ENCODE measurements at regions of chr16 and their contacts with region 1.

Region 1: DNA sequence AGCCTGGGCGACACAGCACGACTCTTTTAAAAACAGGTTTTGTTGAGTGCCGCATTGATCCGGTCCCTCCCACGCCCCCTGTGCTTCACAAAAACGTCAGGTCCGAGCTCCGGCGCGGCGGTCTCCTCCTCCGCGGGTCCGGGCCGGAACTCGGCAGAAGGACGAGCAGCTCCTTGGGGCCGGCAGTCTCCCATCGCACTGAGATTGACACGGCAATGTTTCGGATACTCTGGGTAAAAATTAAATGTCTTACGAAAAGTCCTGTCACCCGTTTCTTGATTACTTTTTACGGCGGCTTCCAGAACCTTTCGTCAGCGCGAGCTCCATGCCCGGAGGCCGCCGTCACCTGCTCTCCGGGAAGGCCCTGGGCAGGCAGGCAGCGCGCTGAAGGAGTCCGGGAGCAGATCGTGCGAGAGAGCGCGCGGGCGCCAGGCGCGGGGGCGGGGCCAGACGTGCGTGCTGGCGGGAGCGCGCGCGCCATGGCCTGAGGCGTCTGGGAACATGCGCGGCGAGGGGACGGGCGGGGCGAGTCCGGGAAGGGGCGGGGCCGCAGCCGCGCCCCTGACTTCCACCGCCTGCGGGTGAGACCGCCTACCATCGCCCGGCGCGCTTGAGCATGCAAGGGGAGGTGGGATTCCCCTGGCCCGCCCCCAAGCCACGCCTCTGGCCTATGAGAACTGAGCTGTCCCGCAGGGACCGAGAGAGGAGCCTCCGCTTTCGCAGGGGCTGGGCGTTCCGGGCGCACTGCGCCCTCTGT is 11.7 kb upstream of the SRL start:
- DNase-seq: peak; percentile 95 to 100
- ATAC-seq: peak; percentile 95 to 96
- H3K4me3 ChIP-seq: peak overlapping the region; percentile 49
- H3K27ac ChIP-seq: peak overlapping the region; percentile 74 to 88
- H3K4me1 ChIP-seq: no peaks in the 10 kb centered on the region
- CTCF ChIP-seq: no peak
- EP300 ChIP-seq: no peak
- POLR2A ChIP-seq: peak; percentile 95
- RAD21 ChIP-seq: peak in 1 of 2 experiments; percentile 95; a peak in 4 of 5 replicates

Region 2: DNA sequence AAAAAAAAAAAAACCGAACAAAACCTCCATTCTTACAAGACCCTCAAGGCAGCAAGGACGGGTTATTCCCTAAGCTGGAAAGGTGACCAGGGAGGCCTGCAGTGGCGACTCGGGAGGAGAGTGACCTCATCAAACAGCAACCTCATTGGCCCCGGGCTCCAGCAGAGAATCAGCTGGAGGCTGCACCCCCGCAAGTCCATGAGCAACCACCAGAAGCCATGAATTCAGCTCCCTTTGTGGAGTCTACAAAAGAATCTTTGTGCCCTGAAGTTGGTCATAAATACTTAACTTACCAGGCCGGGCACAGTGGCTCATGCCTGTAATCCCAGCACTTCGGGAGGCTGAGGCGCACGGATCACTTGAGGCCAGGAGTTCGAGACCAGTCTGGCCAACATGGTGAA is 292.1 kb before region 1 on chr16:
- CTCF ChIA-PET with region 1: interaction called, 23 read pairs
- POLR2A ChIA-PET with region 1: no interaction called
- DNase-seq: peak; percentile 36 to 41
- ATAC-seq: peak; percentile 60 to 72; a peak in 4 of 6 replicates
- H3K4me3 ChIP-seq: peak overlapping the region; percentile 38
- H3K27ac ChIP-seq: peak overlapping the region; percentile 65 to 82
- H3K4me1 ChIP-seq: peaks cover 5% of the 10 kb centered on the region
- CTCF ChIP-seq: no peak
- EP300 ChIP-seq: no peak
- POLR2A ChIP-seq: no peak
- RAD21 ChIP-seq: no peak

Region 3: DNA sequence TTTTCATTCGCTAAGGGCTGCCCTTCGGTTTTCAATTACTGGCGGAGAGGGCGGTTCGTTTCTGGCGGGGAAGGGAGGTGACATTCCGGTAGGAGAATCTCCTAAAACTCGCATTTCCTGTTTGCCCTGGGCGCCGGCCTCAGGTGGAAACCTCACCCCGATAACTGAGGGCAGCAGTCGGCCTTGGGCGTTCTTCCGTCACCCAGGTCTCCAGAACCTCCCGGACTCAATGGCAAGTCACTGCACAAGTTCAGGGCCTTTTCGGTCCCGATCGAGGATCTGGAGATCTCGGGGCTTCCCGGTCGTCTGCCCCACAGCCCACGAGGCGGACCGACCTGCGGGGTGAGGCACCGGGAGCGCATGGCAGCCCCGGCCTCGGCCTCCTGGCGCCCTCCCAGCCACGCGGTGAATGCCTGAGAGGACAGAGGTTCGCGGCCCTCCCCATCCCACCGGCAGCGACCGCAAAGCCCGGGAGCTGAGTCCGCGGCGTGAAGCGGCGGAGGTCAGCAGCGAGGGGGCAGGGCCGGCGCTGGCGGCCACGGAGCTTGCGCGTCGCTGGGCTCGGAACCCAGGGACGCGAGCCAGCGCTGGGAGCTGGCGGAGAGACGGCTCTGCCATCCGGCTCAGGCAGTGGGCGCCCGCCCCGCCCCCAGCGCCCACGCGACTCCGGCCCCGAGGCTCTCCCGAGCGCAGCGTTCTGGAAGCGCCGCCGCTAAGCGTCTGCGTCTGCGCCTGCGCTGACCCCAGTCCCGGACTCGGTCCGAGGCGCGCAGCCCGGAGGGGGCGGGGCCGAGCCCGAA is 70.1 kb before region 1 on chr16:
- CTCF ChIA-PET with region 1: interaction called, 16 read pairs
- POLR2A ChIA-PET with region 1: interaction called, 25 read pairs
- DNase-seq: peak; percentile 88 to 91
- ATAC-seq: peak; percentile 88 to 94
- H3K4me3 ChIP-seq: peak overlapping the region; percentile 84
- H3K27ac ChIP-seq: peak overlapping the region; percentile 97 to 99
- H3K4me1 ChIP-seq: peaks cover 5% of the 10 kb centered on the region; the same call in 2 of the 3 replicates
- CTCF ChIP-seq: no peak
- EP300 ChIP-seq: no peak
- POLR2A ChIP-seq: peak; percentile 43; the same call in 1 of the 2 replicates
- RAD21 ChIP-seq: no peak; a peak in 2 of 5 replicates

Region 4: DNA sequence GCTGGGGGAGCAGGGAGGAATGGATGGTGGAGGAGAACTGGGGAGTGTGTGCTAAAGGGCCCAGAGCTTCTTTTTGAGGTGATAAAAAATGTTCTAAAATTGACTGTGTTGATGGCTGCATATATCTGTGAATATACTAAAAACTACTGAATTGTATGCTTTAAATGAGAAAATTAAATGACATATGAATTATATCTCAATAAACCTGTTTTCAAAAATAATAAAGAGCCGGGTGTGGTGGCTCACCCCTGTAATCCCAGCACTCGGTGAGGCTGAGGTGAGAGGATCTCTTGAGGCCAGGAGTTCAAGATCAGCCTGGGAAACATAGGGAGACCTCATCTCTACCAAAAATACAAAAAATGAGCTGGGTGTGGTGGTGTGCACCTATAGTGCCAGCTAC is 28.5 kb before region 1 on chr16:
- CTCF ChIA-PET with region 1: interaction called, 24 read pairs
- POLR2A ChIA-PET with region 1: interaction called, 3 read pairs
- DNase-seq: no peak
- ATAC-seq: no peak
- H3K4me3 ChIP-seq: no peak overlapping the region
- H3K27ac ChIP-seq: no peak overlapping the region
- H3K4me1 ChIP-seq: no peaks in the 10 kb centered on the region
- CTCF ChIP-seq: no peak
- EP300 ChIP-seq: no peak
- POLR2A ChIP-seq: no peak
- RAD21 ChIP-seq: no peak

Region 5: GRCh38 chr16:4277987-4278513 is 24.5 kb after region 1 on chr16:
- CTCF ChIA-PET with region 1: interaction called, 58 read pairs
- POLR2A ChIA-PET with region 1: interaction called, 16 read pairs
- DNase-seq: no peak
- ATAC-seq: no peak
- H3K4me3 ChIP-seq: no peak overlapping the region
- H3K27ac ChIP-seq: peak overlapping the region in 1 of 2 experiments; percentile 74; a peak in 3 of 6 replicates
- H3K4me1 ChIP-seq: peaks cover 12% of the 10 kb centered on the region
- CTCF ChIP-seq: no peak
- EP300 ChIP-seq: no peak
- POLR2A ChIP-seq: no peak
- RAD21 ChIP-seq: no peak

Region 6: DNA sequence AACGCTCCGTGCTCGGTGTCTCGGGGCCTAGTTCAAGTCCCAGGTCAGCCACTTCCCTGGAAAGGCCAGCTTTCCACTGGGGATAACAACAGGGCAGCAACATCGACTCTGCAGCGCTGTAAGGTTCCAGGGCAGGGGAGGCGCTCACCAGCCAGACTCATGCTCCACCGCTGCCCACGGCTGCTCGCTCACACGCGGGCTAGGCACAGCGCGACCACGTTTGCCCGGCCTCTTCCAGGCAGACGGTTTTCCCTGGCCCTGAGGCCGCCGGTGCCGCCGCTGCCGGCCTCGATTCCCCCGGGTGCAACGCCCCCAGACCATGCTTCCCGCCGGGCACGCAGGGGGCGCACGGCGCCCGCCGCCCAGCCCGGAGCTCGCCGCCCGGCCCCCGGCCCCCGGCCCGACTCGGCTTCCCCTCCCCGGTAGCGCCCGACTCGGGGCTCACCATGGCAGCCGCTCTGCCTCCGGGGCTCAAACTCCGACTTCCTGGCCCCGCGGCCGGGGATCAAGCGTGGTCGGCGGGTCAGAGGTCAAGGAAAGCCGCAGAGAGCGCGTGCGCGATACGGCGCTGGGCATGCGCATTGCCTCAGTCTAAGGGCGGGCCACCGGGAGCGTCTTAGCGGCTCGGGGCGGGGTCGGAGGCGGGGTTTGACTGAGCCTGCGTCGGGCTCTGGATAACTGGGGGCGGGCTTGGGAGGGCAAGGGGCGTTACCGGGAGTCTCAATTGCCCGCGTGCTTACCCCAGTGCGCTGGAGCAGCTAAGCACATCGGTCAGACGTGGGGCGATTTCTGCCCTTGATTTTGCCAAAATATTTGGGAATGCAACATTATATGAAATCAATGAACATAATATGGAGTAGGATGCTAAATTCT is 97.5 kb after region 1 on chr16 and contains the start of gene PAM16:
- CTCF ChIA-PET with region 1: interaction called, 12 read pairs
- POLR2A ChIA-PET with region 1: no interaction called
- DNase-seq: peak; percentile 85 to 95
- ATAC-seq: peak; percentile 85 to 94
- H3K4me3 ChIP-seq: peak within 1 kb of the TSS; percentile 90
- H3K27ac ChIP-seq: peak within 1 kb of the TSS; percentile 94 to 99
- H3K4me1 ChIP-seq: peaks cover 21% of the 10 kb centered on the region
- CTCF ChIP-seq: peak; percentile 28; the same call in 2 of the 3 replicates
- EP300 ChIP-seq: no peak
- POLR2A ChIP-seq: peak; percentile 55
- RAD21 ChIP-seq: no peak
- polyA plus RNA-seq, gene PAM16: 42.5 and 55.1 TPM in 2 replicates

Region 7: GRCh38 chr16:4544473-4544872 is 290.9 kb after region 1 on chr16:
- CTCF ChIA-PET with region 1: no interaction called
- POLR2A ChIA-PET with region 1: no interaction called
- DNase-seq: no peak
- ATAC-seq: no peak
- H3K4me3 ChIP-seq: no peak overlapping the region
- H3K27ac ChIP-seq: no peak overlapping the region
- H3K4me1 ChIP-seq: no peaks in the 10 kb centered on the region
- CTCF ChIP-seq: no peak
- EP300 ChIP-seq: no peak
- POLR2A ChIP-seq: no peak
- RAD21 ChIP-seq: no peak

Measured in A549 (cell line).